Head of caudate nucleus (tissue), 42 donors: ENCODE measurements at regions of chr7 and their contacts with region 1.

Region 1: GRCh38 chr7:96819111-96819700 is 109.6 kb upstream of the SEM1 start:
- DNase-seq: no peak

Region 2: GRCh38 chr7:96685353-96685752 is 133.9 kb before region 1 on chr7:
- intact Hi-C with region 1: no loop called
- DNase-seq: no peak

Region 3: DNA sequence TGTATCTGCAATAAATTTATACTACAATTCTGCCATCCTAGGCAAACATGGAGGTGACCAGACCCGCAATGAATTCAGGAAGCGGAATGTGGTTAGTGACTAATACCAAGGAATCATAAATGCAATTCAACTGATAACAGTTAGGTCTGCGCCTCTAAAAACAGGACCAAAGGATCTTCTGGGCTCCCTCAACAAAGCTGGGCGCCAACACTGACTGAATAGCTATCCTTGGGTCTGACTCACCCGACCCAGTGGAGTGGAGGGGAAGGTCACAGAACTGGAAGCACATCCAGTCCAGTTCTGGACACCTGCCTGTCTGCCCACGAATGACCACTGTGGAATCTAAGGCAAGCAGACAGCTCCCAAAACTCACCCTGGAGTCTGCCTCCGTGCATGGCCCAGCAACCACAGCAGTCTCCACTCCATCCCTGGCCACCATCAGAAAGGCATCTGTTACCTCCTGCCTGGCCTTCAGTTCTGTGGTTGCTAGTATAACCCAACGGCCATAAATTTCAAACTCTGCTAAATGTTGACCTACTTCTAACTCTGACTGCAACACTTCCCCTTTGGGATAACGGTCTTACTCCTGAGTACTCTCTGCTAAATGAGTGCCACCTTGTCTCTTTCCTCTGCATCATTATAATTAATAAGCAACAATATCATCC is 143.1 kb after region 1 on chr7:
- intact Hi-C with region 1: loop called (anchors 5 kb)
- DNase-seq: no peak